ENCODE measurements at regions of chr9 and their contacts with region 1.

Region 1: DNA sequence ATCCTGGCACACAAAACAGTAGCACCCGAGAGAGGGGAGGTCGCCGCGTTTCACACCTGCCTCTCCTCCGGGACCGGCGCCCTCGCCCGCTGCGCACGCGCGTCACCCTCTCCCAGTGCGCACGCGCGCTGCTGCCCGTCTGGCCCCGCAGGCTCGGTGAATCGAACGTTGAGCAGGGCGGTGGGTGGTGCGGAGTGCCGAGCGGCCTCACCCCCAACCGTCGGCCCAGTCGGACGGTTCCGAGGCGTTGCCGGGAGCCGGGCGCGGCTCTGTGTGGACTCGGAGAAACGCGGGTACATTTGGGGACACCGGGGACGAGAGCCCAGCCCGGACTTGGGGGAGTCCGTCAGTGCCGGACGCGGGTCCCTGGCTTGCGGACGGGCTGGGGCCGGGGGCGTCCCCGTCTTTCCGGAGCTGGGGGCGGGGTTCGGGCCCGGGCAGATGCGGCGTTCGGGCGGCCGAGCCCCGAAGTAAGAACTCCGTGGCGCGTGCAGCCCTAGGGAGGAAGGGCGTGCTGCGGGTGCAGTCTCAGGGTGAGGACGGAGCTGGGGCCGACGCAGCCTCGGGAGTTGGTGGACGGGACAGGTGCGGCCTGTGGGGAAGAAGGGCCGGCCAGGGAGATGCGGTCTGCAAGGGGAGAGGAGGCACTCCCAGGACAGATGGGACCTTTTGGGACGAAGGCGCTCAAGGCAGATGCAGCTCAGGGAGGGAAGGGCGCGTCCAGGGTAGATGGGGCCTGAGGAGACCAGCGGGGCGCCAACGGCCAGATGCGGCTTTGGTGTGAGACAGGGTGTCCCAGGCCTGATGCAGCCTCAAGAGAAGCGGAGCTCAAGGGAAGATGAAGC is at the start of gene POMT1:
- DNase-seq: peak; percentile 81 to 98 (median 87)

Region 2: DNA sequence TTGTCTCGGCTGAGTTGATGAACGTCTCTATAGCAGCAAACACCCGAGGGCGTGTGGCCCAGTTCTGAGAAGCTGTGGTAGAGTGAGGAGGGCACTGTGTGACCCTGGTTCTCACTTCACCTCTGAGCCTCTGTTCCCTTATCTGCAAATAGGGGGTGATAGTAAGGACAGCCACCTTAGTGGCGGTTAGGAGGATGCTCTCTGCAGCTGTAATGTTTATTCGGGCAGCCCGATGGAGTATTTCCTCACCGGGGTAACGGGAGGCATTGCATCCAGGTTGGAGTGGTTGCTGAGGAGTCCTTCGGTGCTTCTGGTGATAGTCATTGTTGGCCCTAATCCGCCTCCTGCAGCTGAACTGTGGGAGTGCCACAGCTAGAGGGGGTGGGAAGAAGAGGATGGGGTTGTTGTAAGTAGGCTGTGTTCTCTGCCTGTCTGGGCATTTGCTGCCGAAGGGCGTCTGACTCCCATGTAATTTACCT is 95.2 kb before region 1 on chr9:
- intact Hi-C with region 1: no loop called
- DNase-seq: peak in 6 of 10 donors; percentile 49 to 92 (median 56)

Region 3: GRCh38 chr9:131530920-131531832 is 28.2 kb after region 1 on chr9 and contains the start of gene UCK1:
- intact Hi-C with region 1: loop called (anchors 2 kb)
- DNase-seq: peak; percentile 50 to 95 (median 70)